Sciatic nerve (tissue), 2 donors: ENCODE measurements at regions of chr2 and their contacts with region 1.

Region 1: DNA sequence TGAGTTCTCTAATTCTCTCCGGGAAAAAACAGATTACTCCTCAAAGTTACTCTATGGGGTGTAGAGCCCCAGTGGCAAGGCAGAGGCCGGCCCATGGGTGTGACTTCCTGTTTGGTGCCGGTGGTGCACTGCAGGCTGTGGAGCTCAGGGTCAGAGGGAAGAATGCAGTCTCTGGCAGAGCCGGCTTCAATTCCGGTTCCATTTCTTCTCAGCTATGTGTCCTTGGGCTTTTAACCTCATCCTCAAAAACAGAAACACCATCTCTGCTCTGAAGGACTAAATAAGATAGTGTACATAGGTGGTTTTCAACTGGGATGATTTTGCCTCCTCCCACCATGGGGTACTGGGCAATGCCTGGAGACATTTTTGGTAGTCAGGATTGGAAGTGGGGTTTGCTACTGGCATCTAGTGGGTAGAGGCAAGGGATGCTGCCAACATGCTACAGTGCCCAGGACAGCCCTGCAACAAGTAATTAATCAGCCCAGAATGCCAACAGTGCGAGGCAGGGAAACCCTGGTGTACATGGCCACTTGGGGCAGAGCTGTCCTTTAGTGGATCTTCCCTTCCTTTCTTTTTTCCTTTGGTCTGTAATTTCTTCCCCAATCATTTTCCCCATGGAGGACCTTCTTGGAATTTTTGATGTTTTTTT is 81.2 kb downstream of the INSIG2 start:
- DNase-seq: peak; percentile 63
- ATAC-seq: peak; percentile 62

Region 2: GRCh38 chr2:118154176-118154575 is 15.3 kb before region 1 on chr2:
- intact Hi-C with region 1: loop called (anchors 2 kb)
- DNase-seq: no peak
- ATAC-seq: no peak

Region 3: DNA sequence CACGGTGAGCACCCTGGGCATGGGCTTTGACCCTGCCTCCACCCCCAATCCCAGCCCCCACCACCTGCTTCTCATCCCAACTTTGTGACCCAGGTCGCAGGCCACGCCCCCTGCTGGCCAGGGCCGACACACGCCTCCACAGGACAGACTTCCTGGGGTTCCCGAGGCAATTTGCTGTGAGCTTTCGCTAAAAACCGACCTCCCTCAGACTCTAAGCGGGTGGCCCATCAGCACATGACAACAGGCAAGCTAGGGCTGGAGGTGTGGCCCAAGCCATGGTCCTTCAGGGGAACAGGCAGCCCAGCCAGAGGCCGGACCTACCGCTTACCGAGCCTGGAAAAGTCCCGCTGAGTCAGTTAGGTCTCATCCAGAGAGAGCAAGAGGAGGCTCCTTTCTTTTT is 957.2 kb after region 1 on chr2:
- intact Hi-C with region 1: no loop called
- DNase-seq: no peak
- ATAC-seq: no peak